ENCODE measurements at regions of chr11 and their contacts with region 1.

Region 1: DNA sequence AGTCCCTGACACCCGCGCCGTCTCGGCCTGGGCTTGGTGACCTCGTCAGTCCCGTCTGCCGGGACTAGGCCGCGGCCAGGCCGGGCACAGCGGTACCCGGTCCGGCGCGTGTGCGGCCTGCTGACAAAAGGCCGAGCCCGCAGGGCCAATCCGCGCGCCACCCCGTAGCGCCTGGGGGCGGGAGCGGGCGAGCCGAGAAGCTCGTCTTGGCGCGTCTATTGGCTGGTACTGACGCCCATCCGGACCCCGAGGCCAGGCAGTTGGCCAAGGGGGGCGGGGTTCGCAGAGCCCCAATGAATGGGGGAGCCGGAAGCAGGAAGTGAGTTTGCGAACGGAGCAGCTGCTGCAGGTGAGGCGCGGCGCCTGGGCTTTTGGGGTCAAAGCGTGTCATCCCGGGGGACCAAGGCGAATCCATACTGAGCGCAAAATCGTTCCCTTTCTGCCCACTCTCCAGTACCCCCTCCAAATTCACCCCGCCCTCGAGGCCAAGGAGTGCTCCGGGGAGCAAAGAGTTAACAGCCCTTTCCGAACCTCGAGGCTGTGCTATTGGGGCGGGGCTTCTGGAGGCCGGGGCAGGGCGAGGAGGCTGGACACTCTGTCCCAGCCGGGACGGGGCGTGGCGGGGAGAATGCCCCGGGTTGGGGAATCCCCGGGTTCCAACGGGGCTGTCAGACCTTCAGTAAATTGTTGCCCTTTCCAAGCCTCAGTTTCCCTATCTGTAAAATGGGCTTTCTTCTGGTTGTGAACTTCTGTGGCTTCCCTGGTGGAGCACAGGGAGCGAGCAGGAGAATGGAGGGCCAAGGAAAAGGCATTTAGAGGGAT is at the start of gene DPP3:
- DNase-seq: peak; percentile 96 to 98 (median 96)
- H3K4me3 ChIP-seq: peak within 1 kb of the TSS; percentile 51 to 87 (median 77)
- H3K4me3 Mint-ChIP-seq: peak within 1 kb of the TSS; percentile 85 to 89
- H3K27ac ChIP-seq: peak within 1 kb of the TSS; percentile 82 to 96
- H3K27ac Mint-ChIP-seq: peak within 1 kb of the TSS; percentile 90 to 96 (median 92)
- H3K4me1 ChIP-seq: peaks cover 19 to 24% of the 10 kb centered on the region in 2 donors
- H3K4me1 Mint-ChIP-seq: peaks cover 18% of the 10 kb centered on the region
- H3K27me3 ChIP-seq: no peaks in the 10 kb centered on the region
- H3K27me3 Mint-ChIP-seq: peaks cover 0 to 5% (median 0%) of the 10 kb centered on the region in 3 donors
- CTCF ChIP-seq: no peak
- polyA plus RNA-seq, gene DPP3: 22.4 to 37.0 (median 26.7) TPM

Region 2: GRCh38 chr11:66438504-66439466 is 41.5 kb before region 1 on chr11 and contains the start of gene MRPL11:
- intact Hi-C with region 1: loop called (anchors 1 to 5 kb)
- DNase-seq: peak; percentile 82 to 88 (median 85)
- H3K4me3 ChIP-seq: peak within 1 kb of the TSS; percentile 59 to 91 (median 66)
- H3K4me3 Mint-ChIP-seq: peak within 1 kb of the TSS; percentile 85 to 96
- H3K27ac ChIP-seq: peak within 1 kb of the TSS; percentile 6 to 81
- H3K27ac Mint-ChIP-seq: peak within 1 kb of the TSS; percentile 81 to 99 (median 97)
- H3K4me1 ChIP-seq: peaks cover 19 to 23% of the 10 kb centered on the region in 2 donors
- H3K4me1 Mint-ChIP-seq: peaks cover 17% of the 10 kb centered on the region
- H3K27me3 ChIP-seq: no peaks in the 10 kb centered on the region
- H3K27me3 Mint-ChIP-seq: peaks cover 0 to 2% (median 0%) of the 10 kb centered on the region in 3 donors
- CTCF ChIP-seq: peak; percentile 53
- polyA plus RNA-seq, gene MRPL11: 14.7 to 64.6 (median 59.6) TPM

Measured in CD14-positive monocyte (primary cell).